Dorsolateral prefrontal cortex (tissue), 120 donors: ENCODE measurements at regions of chr14 and their contacts with region 1.

Region 1: GRCh38 chr14:94689218-94689984 is 77.2 kb downstream of the SERPINA3 start:
- DNase-seq: peak in 9 of 10 donors; percentile 40 to 81 (median 60)
- H3K4me3 ChIP-seq: peak overlapping the region in 28 of 59 donors; percentile 1 to 39 (median 22)
- H3K27ac ChIP-seq: no peak overlapping the region
- H3K27me3 ChIP-seq: peaks cover 0 to 7% (median 0%) of the 10 kb centered on the region in 45 donors
- CTCF ChIP-seq: peak; percentile 77 to 98 (median 95)

Region 2: GRCh38 chr14:94458558-94459205 is 230.7 kb before region 1 on chr14:
- intact Hi-C with region 1: no loop called
- DNase-seq: no peak
- H3K4me3 ChIP-seq: no peak overlapping the region
- H3K27ac ChIP-seq: no peak overlapping the region
- H3K27me3 ChIP-seq: peaks cover 0 to 11% (median 0%) of the 10 kb centered on the region in 45 donors
- CTCF ChIP-seq: no peak

Region 3: GRCh38 chr14:94598814-94599652 is 90.4 kb before region 1 on chr14:
- intact Hi-C with region 1: loop called in 1 of 2 experiments (anchors 5 kb)
- DNase-seq: peak in 9 of 10 donors; percentile 13 to 89 (median 77)
- H3K4me3 ChIP-seq: no peak overlapping the region
- H3K27ac ChIP-seq: peak overlapping the region in 56 of 59 donors; percentile 3 to 91 (median 76)
- H3K27me3 ChIP-seq: no peaks in the 10 kb centered on the region
- CTCF ChIP-seq: peak in 16 of 56 donors; percentile 10 to 53 (median 20)

Region 4: DNA sequence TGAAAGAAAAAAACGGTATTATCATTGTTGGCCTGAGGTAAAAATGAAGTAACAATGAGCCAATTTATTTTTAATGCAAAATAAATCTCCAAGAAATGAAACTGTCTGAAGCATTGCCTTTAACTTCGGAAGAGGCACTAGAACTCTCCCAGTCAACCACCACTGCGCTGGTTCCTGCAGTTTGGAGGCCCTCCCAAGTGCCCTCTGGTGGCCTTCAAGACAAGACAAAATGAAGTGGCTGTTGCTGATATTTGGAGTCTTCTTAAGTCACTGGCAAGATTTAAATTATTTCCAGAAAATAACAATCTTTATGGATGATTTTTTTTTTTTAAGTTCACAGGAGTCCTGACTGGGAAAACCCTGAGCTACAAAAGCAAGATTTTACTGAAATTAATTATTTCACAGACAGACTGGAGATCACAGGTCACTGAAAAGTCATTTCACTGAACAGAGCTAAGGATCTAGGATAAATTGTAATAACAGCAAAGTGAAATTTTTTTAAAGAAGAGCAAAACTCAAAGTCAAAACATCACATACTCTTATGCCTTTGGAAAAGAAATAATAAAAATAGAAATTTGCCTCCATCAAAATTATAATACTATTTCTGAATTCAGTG is 409.7 kb after region 1 on chr14:
- intact Hi-C with region 1: loop called in 1 of 2 experiments (anchors 5 kb)
- DNase-seq: peak; percentile 27 to 67 (median 58)
- H3K4me3 ChIP-seq: no peak overlapping the region
- H3K27ac ChIP-seq: peak overlapping the region in 15 of 59 donors; percentile 4 to 80 (median 34)
- H3K27me3 ChIP-seq: no peaks in the 10 kb centered on the region
- CTCF ChIP-seq: peak in 55 of 56 donors; percentile 37 to 86 (median 67)

Region 5: GRCh38 chr14:95340201-95340697 is 650.8 kb after region 1 on chr14:
- intact Hi-C with region 1: loop called in 1 of 2 experiments (anchors 10 kb)
- DNase-seq: no peak
- H3K4me3 ChIP-seq: no peak overlapping the region
- H3K27ac ChIP-seq: no peak overlapping the region
- H3K27me3 ChIP-seq: peaks cover 0 to 8% (median 0%) of the 10 kb centered on the region in 45 donors
- CTCF ChIP-seq: no peak